ENCODE measurements at regions of chr17 and their contacts with region 1.

Region 1: DNA sequence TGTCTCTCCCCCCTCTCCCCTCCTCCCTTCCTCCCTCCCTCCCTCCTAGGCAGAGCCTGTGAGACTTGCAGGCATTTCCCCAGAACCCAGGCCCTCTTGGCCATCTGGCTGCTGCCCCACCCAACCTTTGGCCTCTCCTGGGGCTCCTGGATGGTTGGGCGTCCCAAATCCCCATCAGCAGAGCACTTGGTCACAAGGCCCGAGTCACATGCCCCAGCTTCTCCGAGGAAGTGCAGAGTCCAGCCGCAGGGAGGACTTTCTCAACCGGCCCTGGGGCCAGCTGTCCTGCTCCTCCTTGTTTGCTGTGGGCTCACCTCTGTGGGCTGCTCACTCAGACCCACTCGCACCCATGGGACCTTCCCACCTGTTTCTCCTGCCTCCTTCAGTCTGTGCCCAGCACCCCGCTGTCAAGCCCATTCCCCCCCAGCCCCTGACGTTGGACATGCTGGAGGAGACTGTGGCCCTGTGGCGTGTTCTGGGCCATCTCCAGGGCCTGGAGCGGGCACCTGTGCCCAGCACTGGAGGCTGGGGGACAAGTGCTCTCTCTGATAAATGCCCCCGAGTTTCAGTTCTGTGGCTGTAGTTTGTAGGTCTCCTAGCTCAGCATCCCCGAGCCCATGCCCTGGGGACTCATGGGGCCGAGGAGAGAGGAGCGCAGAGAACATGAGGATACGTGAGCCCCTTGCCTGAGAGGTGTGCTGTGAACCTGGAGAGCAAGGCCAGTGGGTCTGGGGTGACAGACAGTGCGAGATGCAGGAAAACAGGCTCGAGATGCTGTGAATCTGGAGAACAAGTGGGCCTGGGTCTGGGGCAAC is 42.3 kb upstream of the ZNF750 start:
- DNase-seq: no peak
- H3K4me3 Mint-ChIP-seq: peak overlapping the region; percentile 73
- H3K27ac Mint-ChIP-seq: peak overlapping the region; percentile 93
- H3K4me1 Mint-ChIP-seq: peaks cover 75% of the 10 kb centered on the region
- H3K27me3 Mint-ChIP-seq: no peaks in the 10 kb centered on the region

Region 2: DNA sequence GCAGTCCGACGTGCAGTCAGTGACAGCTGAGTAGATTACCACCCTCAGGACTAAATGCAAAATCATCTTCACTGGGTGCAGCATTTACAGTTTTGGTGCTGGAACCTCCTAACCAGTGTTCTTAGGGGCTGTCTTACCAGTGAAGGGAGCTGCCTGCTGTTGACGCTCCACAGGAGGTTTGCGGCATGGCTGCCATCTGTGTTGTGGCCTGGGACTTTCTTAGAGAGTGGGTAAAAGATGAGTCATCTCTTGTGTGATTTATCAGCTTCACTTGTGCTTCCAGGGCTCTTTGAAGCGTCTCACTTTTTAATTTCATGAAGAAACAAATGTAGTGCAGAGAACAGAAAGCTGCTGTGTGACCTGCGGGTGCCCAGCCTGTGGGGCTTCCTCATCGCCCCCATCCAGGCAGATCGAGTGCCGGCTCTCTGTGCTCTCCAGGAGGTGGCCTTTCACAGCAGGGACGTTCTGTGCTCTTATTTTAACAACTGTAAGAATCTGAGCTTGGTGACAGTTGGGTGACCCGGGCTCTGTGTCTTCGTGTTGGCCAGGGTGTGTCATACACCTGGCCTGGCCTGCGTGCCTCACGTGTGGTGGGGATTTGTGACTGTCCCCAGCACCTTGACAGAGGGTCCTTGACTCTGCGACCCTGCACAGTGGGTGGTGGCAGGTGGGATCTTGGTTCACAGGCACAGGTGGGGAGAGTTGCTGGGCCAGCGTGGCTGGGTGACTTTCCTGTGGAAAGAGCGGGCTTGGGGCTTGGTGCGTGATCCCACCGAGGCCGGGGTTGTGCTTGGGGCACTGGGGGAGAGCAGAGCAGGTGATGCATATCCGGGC is 17.9 kb before region 1 on chr17:
- CTCF ChIA-PET with region 1: interaction called, 3 read pairs
- POLR2A ChIA-PET with region 1: interaction called, 8 read pairs
- intact Hi-C with region 1: loop called (anchors 1 kb)
- DNase-seq: peak; percentile 95
- H3K4me3 Mint-ChIP-seq: peak overlapping the region; percentile 69
- H3K27ac Mint-ChIP-seq: peak overlapping the region; percentile 85
- H3K4me1 Mint-ChIP-seq: peaks cover 83% of the 10 kb centered on the region
- H3K27me3 Mint-ChIP-seq: no peaks in the 10 kb centered on the region

Region 3: DNA sequence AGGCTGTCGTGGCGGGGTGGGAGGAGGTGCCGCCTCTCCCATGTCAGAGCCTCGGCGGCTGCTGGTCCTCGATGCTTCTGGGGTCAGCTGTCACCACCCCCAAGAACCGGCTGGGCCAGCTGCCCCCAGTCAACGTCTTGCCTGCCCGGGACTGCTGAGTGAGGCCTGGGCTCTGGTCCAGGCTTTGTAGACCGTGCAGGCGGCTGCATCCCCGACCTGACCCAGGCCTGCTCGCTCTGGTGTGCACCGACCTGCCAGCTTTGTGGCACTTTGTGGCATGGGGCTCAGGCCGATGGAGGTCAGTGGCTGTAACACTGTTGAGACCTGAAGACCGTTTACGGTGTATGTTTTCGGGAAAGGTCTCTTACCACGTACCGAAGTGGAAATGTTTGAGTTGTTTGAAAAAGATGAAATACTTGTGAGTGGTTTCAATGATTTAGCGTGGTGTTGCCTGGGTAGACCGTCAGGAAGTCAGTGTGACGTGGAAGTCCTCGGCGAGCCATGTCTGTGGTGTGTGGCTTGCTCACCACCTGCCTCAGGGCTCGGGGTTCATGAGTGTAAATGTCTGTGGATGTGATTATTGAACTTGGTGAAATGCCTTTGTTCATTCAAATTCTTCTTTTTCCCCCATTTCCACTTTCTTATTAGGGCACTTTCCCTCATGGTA is 10.9 kb after region 1 on chr17:
- CTCF ChIA-PET with region 1: no interaction called
- POLR2A ChIA-PET with region 1: no interaction called
- intact Hi-C with region 1: loop called (anchors 1 kb)
- DNase-seq: peak; percentile 82
- H3K4me3 Mint-ChIP-seq: peak overlapping the region; percentile 55
- H3K27ac Mint-ChIP-seq: peak overlapping the region; percentile 87
- H3K4me1 Mint-ChIP-seq: peaks cover 36% of the 10 kb centered on the region
- H3K27me3 Mint-ChIP-seq: no peaks in the 10 kb centered on the region

Region 4: DNA sequence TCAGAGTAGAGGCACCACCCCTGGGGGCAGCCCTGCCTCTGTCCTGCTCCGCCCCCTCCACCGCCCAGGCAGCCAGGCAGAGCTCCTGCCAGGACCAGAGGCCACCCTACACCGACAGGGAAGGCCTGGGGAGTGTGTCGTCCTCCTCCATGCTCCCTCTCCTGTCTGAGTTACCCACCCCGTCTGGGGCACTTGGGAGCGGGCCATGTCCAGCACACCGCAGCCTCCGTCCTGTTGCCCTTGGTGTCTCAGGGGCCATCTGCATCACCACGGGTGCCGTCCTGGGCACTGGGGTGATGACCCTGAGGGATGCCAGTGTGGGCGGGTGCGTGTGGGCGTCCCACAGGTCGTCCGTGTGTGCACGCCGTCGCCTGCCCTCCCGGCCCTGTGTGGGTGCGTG is 23.0 kb after region 1 on chr17:
- CTCF ChIA-PET with region 1: no interaction called
- POLR2A ChIA-PET with region 1: no interaction called
- intact Hi-C with region 1: no loop called
- DNase-seq: no peak
- H3K4me3 Mint-ChIP-seq: no peak overlapping the region
- H3K27ac Mint-ChIP-seq: no peak overlapping the region
- H3K4me1 Mint-ChIP-seq: peaks cover 9% of the 10 kb centered on the region
- H3K27me3 Mint-ChIP-seq: no peaks in the 10 kb centered on the region

Region 5: DNA sequence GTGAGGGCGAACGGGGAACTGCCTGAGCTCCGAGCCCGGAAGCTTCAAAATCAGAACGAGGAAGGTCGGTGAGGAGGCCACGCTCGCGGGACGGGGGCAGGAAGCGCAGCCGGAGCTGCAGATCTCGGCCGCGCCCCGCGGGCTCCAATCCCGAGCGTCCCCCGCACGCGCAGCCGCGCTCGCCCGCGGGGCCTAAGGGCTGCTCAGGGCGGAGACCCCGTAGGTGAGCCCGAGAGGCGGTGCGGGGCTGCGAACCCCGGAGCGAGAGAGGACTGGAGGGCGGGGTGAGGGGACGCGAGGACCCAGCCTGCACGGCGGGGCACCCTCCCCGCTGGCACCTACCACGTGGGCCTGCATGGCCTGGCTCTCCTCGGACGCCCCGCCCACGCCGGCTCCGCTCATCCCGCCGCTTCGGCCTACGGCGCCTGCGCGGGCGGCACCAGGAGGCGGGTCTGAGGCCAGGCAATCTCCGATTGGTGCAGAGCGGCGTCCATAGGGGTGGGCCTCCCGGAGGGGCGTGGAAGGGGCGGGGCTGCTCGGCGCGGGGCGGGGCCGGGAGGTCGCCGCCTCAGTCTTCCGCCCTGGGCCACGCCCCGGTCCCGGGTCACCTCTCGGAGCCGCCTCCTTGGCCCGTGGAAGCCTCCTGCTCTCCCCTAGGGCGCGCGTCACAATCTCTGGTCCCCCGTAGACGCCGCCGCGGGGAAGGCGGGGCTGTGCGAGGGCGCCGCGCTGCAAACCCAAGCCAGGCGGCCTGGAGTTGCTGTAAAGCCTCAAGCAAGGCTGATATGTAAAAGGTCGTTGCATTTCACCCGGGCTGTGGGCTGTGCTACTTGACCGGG is 169.5 kb after region 1 on chr17:
- CTCF ChIA-PET with region 1: no interaction called
- POLR2A ChIA-PET with region 1: no interaction called
- intact Hi-C with region 1: loop called (anchors 10 kb)
- DNase-seq: peak; percentile 99
- H3K4me3 Mint-ChIP-seq: peak overlapping the region; percentile 86
- H3K27ac Mint-ChIP-seq: peak overlapping the region; percentile 88
- H3K4me1 Mint-ChIP-seq: peaks cover 40% of the 10 kb centered on the region
- H3K27me3 Mint-ChIP-seq: no peaks in the 10 kb centered on the region